Caco-2 (cell line): ENCODE measurements at regions of chr10 and their contacts with region 1.

Region 1: DNA sequence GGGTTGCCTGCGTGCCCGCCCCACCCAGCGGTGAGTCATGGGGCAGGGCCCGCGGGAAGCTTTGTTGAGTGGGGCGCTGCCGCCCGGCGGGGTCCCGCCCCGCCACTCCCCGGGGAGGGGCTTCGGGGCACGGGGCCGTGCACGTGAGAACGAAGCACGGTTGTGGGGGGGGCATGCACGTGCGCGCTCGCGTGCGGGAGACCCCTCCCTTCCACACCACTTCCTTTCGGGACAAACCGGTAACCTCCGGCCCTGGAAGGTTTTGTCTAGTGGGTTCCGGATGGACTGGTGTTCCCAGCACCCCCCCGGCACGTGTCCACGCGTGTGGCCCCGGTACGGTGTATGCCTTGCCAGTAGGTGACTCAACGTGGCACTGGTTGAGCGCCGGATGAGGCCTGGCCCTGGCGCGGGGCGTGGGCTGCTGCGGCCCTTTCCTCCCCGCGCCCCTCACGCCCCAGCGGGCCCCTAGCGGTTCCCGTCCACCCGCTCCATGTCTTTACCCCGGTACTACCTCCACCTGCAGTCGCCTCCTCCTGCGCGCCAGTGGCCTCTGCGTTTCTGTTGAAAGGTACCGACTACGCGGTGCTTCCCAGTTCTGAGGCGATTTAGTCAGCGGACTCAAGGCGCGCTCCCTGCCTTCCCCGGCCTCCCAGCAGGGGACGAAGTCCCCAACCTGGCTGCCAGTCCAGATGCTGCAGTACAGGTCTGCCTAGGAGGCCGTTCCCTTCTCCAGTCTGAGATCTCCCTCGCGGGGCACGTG is 3.1 kb downstream of the ADIRF start:
- DNase-seq: peak; percentile 95 to 98
- H3K4me3 ChIP-seq: peak overlapping the region; percentile 44
- H3K4me3 Mint-ChIP-seq: peak overlapping the region; percentile 96
- H3K27ac Mint-ChIP-seq: peak overlapping the region; percentile 83
- H3K4me1 ChIP-seq: peaks cover 54% of the 10 kb centered on the region
- H3K4me1 Mint-ChIP-seq: peaks cover 43% of the 10 kb centered on the region
- H3K27me3 ChIP-seq: no peaks in the 10 kb centered on the region
- H3K27me3 Mint-ChIP-seq: no peaks in the 10 kb centered on the region
- CTCF ChIP-seq: peak; percentile 19 to 45

Region 2: GRCh38 chr10:86936661-86937501 is 34.5 kb before region 1 on chr10:
- CTCF ChIA-PET with region 1: interaction called, 21 read pairs
- POLR2A ChIA-PET with region 1: no interaction called
- intact Hi-C with region 1: loop called (anchors 1 kb)
- DNase-seq: no peak
- H3K4me3 ChIP-seq: no peak overlapping the region
- H3K4me3 Mint-ChIP-seq: no peak overlapping the region
- H3K27ac Mint-ChIP-seq: no peak overlapping the region
- H3K4me1 ChIP-seq: peaks cover 9% of the 10 kb centered on the region; the same call in 1 of the 2 replicates
- H3K4me1 Mint-ChIP-seq: no peaks in the 10 kb centered on the region
- H3K27me3 ChIP-seq: no peaks in the 10 kb centered on the region
- H3K27me3 Mint-ChIP-seq: no peaks in the 10 kb centered on the region
- CTCF ChIP-seq: no peak

Region 3: DNA sequence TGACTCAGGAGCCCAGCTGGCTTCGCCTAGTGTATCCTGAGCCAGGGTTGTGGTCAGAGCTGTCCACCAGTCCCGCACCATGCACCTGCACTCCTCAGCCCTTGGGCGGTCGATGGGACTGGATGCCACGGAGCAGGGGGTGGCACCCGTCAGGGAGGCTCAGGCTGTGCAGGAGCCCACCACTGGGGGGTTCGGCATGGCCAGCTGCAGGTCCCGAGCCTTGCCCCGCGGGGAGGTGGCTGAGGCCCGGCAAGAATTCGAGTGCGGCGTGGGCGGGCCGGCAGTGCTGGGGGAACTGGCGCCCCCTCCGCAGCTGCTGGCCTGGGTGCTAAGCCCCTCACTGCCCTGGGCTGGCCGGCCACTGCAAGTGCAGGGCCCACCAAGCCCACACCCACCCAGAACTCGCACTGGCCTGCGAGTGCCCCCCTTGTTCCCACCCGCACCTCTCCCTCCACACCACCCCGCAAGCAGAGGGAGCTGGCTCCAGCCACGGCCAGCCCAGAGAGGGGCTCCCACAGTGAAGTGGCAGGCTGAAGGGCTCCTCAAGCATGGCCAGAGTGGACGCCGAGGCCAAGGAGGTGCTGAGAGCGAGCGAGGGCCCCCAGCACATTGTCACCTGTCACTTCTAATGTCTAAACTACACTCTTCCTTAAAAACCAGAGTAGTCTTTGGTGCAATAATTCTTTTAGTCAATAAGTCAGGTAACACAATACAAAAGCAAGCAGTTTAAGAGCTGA is 59.7 kb after region 1 on chr10:
- CTCF ChIA-PET with region 1: no interaction called
- POLR2A ChIA-PET with region 1: no interaction called
- intact Hi-C with region 1: loop called (anchors 5 kb)
- DNase-seq: no peak
- H3K4me3 ChIP-seq: no peak overlapping the region
- H3K4me3 Mint-ChIP-seq: no peak overlapping the region
- H3K27ac Mint-ChIP-seq: no peak overlapping the region
- H3K4me1 ChIP-seq: no peaks in the 10 kb centered on the region
- H3K4me1 Mint-ChIP-seq: no peaks in the 10 kb centered on the region
- H3K27me3 ChIP-seq: no peaks in the 10 kb centered on the region
- H3K27me3 Mint-ChIP-seq: no peaks in the 10 kb centered on the region
- CTCF ChIP-seq: no peak

Region 4: GRCh38 chr10:87094373-87095235 is 123.2 kb after region 1 on chr10 and contains the starts of genes GLUD1 and SHLD2:
- CTCF ChIA-PET with region 1: no interaction called
- POLR2A ChIA-PET with region 1: interaction called, 3 read pairs
- intact Hi-C with region 1: loop called (anchors 2 kb)
- DNase-seq: peak; percentile 96 to 97
- H3K4me3 ChIP-seq: peak within 1 kb of the TSS; percentile 96
- H3K4me3 Mint-ChIP-seq: peak within 1 kb of the TSS; percentile 88
- H3K27ac Mint-ChIP-seq: peak within 1 kb of the TSS; percentile 77
- H3K4me1 ChIP-seq: peaks cover 33% of the 10 kb centered on the region
- H3K4me1 Mint-ChIP-seq: peaks cover 24% of the 10 kb centered on the region
- H3K27me3 ChIP-seq: no peaks in the 10 kb centered on the region
- H3K27me3 Mint-ChIP-seq: no peaks in the 10 kb centered on the region
- CTCF ChIP-seq: peak in 1 of 2 experiments; percentile 4
- total RNA-seq, gene GLUD1: 767 and 787 TPM in 2 replicates
- total RNA-seq, gene SHLD2: 49.3 and 51.0 TPM in 2 replicates